CD8-positive, alpha-beta T cell (primary cell): ENCODE measurements at regions of chr7 and their contacts with region 1.

Region 1: GRCh38 chr7:909358-910329 is 33.3 kb downstream of the GET4 start:
- DNase-seq: peak in 6 of 9 experiments; percentile 30 to 64 (median 47)
- ATAC-seq: peak; percentile 19
- H3K4me3 ChIP-seq: peak overlapping the region in 1 of 2 experiments; percentile 48
- H3K4me3 Mint-ChIP-seq: peak overlapping the region; percentile 55
- H3K27ac ChIP-seq: no peak overlapping the region
- H3K27ac Mint-ChIP-seq: peak overlapping the region; percentile 75
- H3K4me1 ChIP-seq: peaks cover 15% of the 10 kb centered on the region
- H3K4me1 Mint-ChIP-seq: peaks cover 9% of the 10 kb centered on the region
- H3K27me3 ChIP-seq: no peaks in the 10 kb centered on the region
- H3K27me3 Mint-ChIP-seq: no peaks in the 10 kb centered on the region
- CTCF ChIP-seq: no peak

Region 2: GRCh38 chr7:264541-265191 is 645.0 kb before region 1 on chr7:
- CTCF ChIA-PET with region 1: no interaction called
- POLR2A ChIA-PET with region 1: no interaction called
- intact Hi-C with region 1: no loop called
- DNase-seq: peak in 1 of 9 experiments; percentile 31
- ATAC-seq: peak; percentile 23
- H3K4me3 ChIP-seq: no peak overlapping the region
- H3K4me3 Mint-ChIP-seq: no peak overlapping the region
- H3K27ac ChIP-seq: no peak overlapping the region
- H3K27ac Mint-ChIP-seq: no peak overlapping the region
- H3K4me1 ChIP-seq: no peaks in the 10 kb centered on the region
- H3K4me1 Mint-ChIP-seq: peaks cover 2% of the 10 kb centered on the region
- H3K27me3 ChIP-seq: no peaks in the 10 kb centered on the region
- H3K27me3 Mint-ChIP-seq: no peaks in the 10 kb centered on the region
- CTCF ChIP-seq: no peak

Region 3: GRCh38 chr7:954330-955238 is 44.9 kb after region 1 on chr7 and contains the start of gene ADAP1:
- CTCF ChIA-PET with region 1: interaction called, 33 read pairs
- POLR2A ChIA-PET with region 1: interaction called, 16 read pairs
- intact Hi-C with region 1: loop called (anchors 1 kb)
- DNase-seq: peak in 8 of 9 experiments; percentile 45 to 87 (median 60)
- ATAC-seq: peak; percentile 83
- H3K4me3 ChIP-seq: peak within 1 kb of the TSS in 1 of 2 experiments; percentile 45
- H3K4me3 Mint-ChIP-seq: peak within 1 kb of the TSS; percentile 70
- H3K27ac ChIP-seq: no peak within 1 kb of the TSS
- H3K27ac Mint-ChIP-seq: peak within 1 kb of the TSS; percentile 70
- H3K4me1 ChIP-seq: no peaks in the 10 kb centered on the region
- H3K4me1 Mint-ChIP-seq: peaks cover 9% of the 10 kb centered on the region
- H3K27me3 ChIP-seq: no peaks in the 10 kb centered on the region
- H3K27me3 Mint-ChIP-seq: no peaks in the 10 kb centered on the region
- CTCF ChIP-seq: no peak
- total RNA-seq, gene ADAP1: 10.9 to 11.5 TPM

Region 4: DNA sequence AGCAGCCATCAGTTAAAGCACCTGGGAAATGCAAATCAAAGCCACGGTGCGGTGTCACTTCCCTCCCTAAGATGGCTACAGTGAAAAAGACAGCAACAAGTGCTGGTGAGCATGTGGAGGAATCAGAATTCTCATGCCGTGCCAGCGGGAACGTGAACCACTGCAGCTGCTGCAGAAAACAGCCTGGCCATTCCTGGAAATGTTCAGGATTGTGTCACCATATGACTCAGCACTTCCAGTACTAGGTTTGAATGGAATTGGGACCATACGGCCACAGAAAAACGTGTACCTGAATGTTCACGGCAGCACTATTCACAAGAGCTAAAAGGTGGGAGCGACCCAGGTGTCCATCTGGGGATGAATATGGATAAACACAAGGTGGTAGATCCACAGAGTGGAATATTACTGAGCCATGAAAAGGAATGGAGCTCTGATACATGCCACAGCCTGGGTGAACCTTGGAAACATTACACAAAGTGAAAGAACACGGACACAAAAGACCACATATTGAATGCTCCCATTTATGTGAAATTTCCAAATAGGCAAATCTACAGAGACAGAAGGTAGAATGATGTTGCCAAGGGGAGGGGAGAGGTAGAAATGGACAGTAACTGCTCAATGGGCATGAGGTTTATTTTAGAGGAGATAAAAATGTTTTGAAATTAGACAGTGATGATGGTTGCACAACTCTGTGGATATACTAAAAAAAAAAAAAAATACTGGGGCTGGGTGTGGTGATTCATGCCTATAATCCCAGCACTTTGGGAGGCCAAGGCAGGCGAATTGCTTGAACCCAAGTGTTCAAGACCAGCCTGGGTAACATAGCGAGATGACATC is 488.1 kb after region 1 on chr7:
- CTCF ChIA-PET with region 1: no interaction called
- POLR2A ChIA-PET with region 1: no interaction called
- intact Hi-C with region 1: no loop called
- DNase-seq: no peak
- ATAC-seq: no peak
- H3K4me3 ChIP-seq: no peak overlapping the region
- H3K4me3 Mint-ChIP-seq: no peak overlapping the region
- H3K27ac ChIP-seq: no peak overlapping the region
- H3K27ac Mint-ChIP-seq: no peak overlapping the region
- H3K4me1 ChIP-seq: no peaks in the 10 kb centered on the region
- H3K4me1 Mint-ChIP-seq: no peaks in the 10 kb centered on the region
- H3K27me3 ChIP-seq: peaks cover 0 to 7% of the 10 kb centered on the region in 2 experiments
- H3K27me3 Mint-ChIP-seq: peaks cover 39% of the 10 kb centered on the region
- CTCF ChIP-seq: no peak